HCT116 (cell line): ENCODE measurements at regions of chr13 and their contacts with region 1.

Region 1: DNA sequence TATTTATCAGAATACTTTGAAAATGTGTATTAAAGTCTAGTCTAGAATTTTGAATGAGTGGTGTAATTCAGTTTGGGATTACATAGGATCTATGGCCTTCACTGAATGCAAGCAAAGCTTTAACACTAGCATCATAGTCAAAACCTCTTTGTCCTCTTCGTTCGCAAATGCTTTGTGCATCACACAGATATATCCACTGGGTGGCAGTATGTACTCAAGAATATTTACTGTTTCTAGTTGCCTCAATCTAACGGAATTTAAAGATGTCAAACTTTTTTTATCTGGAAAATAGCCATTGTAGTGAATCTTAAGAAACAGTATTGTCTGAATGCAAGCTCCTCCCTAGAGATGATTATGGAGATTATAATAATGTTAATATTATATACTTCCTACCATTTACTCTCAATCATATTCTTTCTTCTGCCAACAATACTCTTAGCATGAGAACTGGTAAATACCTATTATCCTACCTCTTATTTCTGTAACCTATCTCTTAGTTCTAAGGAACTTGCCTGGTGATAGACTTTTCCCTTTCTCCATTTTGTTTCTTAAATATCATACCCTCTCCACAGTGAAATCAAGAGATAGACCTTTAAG is 25.8 kb downstream of the LACC1 start:
- DNase-seq: peak; percentile 58
- ATAC-seq: peak; percentile 83
- H3K4me3 ChIP-seq: no peak overlapping the region
- H3K27ac ChIP-seq: no peak overlapping the region
- H3K4me1 ChIP-seq: peaks cover 0 to 7% of the 10 kb centered on the region in 2 experiments; a peak in 2 of 4 replicates
- H3K27me3 ChIP-seq: no peaks in the 10 kb centered on the region
- CTCF ChIP-seq: peak; percentile 62 to 83 (median 62)
- POLR2A ChIP-seq: no peak
- RAD21 ChIP-seq: peak; percentile 87

Region 2: GRCh38 chr13:44050450-44051063 is 145.0 kb after region 1 on chr13:
- CTCF ChIA-PET with region 1: interaction called, 3 read pairs
- POLR2A ChIA-PET with region 1: no interaction called
- RAD21 ChIA-PET with region 1: no interaction called
- intact Hi-C with region 1: loop called (anchors 1 kb)
- DNase-seq: peak; percentile 32
- ATAC-seq: peak; percentile 54; the same call in 1 of the 2 replicates
- H3K4me3 ChIP-seq: no peak overlapping the region
- H3K27ac ChIP-seq: no peak overlapping the region
- H3K4me1 ChIP-seq: no peaks in the 10 kb centered on the region
- H3K27me3 ChIP-seq: no peaks in the 10 kb centered on the region
- CTCF ChIP-seq: peak; percentile 51 to 69 (median 67); a peak in 5 of 6 replicates
- POLR2A ChIP-seq: no peak
- RAD21 ChIP-seq: peak; percentile 78

Region 3: GRCh38 chr13:44231786-44232516 is 326.4 kb after region 1 on chr13:
- CTCF ChIA-PET with region 1: no interaction called
- POLR2A ChIA-PET with region 1: no interaction called
- RAD21 ChIA-PET with region 1: no interaction called
- intact Hi-C with region 1: loop called (anchors 2 kb)
- DNase-seq: peak; percentile 97
- ATAC-seq: peak; percentile 96
- H3K4me3 ChIP-seq: peak overlapping the region in 1 of 2 experiments; percentile 39; a peak in 1 of 4 replicates
- H3K27ac ChIP-seq: peak overlapping the region; percentile 90
- H3K4me1 ChIP-seq: peaks cover 23 to 48% of the 10 kb centered on the region in 2 experiments
- H3K27me3 ChIP-seq: no peaks in the 10 kb centered on the region
- CTCF ChIP-seq: 0 out of 6 replicates have a peak, but pooled peaks of 1 of the 3 experiments have one; percentile 10
- POLR2A ChIP-seq: no peak
- RAD21 ChIP-seq: peak; percentile 50

Region 4: GRCh38 chr13:44465318-44465717 is 559.8 kb after region 1 on chr13:
- CTCF ChIA-PET with region 1: interaction called, 24 read pairs
- POLR2A ChIA-PET with region 1: no interaction called
- RAD21 ChIA-PET with region 1: no interaction called
- intact Hi-C with region 1: no loop called
- DNase-seq: no peak
- ATAC-seq: 0 out of 2 replicates have a peak, but pooled peaks have one; percentile 27
- H3K4me3 ChIP-seq: no peak overlapping the region
- H3K27ac ChIP-seq: no peak overlapping the region
- H3K4me1 ChIP-seq: peaks cover 0 to 11% of the 10 kb centered on the region in 2 experiments; a peak in 2 of 4 replicates
- H3K27me3 ChIP-seq: no peaks in the 10 kb centered on the region
- CTCF ChIP-seq: no peak
- POLR2A ChIP-seq: no peak
- RAD21 ChIP-seq: no peak

Region 5: GRCh38 chr13:44969551-44970484 is 1064.3 kb after region 1 on chr13:
- CTCF ChIA-PET with region 1: no interaction called
- POLR2A ChIA-PET with region 1: no interaction called
- RAD21 ChIA-PET with region 1: no interaction called
- intact Hi-C with region 1: loop called (anchors 2 kb)
- DNase-seq: peak; percentile 26
- ATAC-seq: peak; percentile 66
- H3K4me3 ChIP-seq: no peak overlapping the region
- H3K27ac ChIP-seq: no peak overlapping the region
- H3K4me1 ChIP-seq: no peaks in the 10 kb centered on the region
- H3K27me3 ChIP-seq: no peaks in the 10 kb centered on the region
- CTCF ChIP-seq: peak; percentile 63 to 85 (median 68)
- POLR2A ChIP-seq: no peak
- RAD21 ChIP-seq: peak; percentile 86